ENCODE measurements at regions of chr2 and their contacts with region 1.

Region 1: GRCh38 chr2:241443486-241444223 is 64.7 kb downstream of the STK25 start:
- DNase-seq: peak; percentile 98
- H3K4me3 Mint-ChIP-seq: no peak overlapping the region
- H3K27ac Mint-ChIP-seq: peak overlapping the region; percentile 22
- H3K4me1 Mint-ChIP-seq: peaks cover 24% of the 10 kb centered on the region
- H3K27me3 Mint-ChIP-seq: peaks cover 54% of the 10 kb centered on the region

Region 2: GRCh38 chr2:241339839-241340630 is 103.6 kb before region 1 on chr2:
- CTCF ChIA-PET with region 1: no interaction called
- intact Hi-C with region 1: loop called (anchors 1 kb)
- DNase-seq: no peak
- H3K4me3 Mint-ChIP-seq: no peak overlapping the region
- H3K27ac Mint-ChIP-seq: peak overlapping the region; percentile 80
- H3K4me1 Mint-ChIP-seq: peaks cover 44% of the 10 kb centered on the region
- H3K27me3 Mint-ChIP-seq: no peaks in the 10 kb centered on the region

Region 3: GRCh38 chr2:241355983-241356870 is 87.4 kb before region 1 on chr2 and contains the start of gene FARP2:
- CTCF ChIA-PET with region 1: no interaction called
- intact Hi-C with region 1: loop called (anchors 1 kb)
- DNase-seq: peak; percentile 99
- H3K4me3 Mint-ChIP-seq: peak within 1 kb of the TSS; percentile 78
- H3K27ac Mint-ChIP-seq: peak within 1 kb of the TSS; percentile 76
- H3K4me1 Mint-ChIP-seq: peaks cover 27% of the 10 kb centered on the region
- H3K27me3 Mint-ChIP-seq: no peaks in the 10 kb centered on the region
- total RNA-seq, gene FARP2: 19.5 to 19.6 TPM

Region 4: DNA sequence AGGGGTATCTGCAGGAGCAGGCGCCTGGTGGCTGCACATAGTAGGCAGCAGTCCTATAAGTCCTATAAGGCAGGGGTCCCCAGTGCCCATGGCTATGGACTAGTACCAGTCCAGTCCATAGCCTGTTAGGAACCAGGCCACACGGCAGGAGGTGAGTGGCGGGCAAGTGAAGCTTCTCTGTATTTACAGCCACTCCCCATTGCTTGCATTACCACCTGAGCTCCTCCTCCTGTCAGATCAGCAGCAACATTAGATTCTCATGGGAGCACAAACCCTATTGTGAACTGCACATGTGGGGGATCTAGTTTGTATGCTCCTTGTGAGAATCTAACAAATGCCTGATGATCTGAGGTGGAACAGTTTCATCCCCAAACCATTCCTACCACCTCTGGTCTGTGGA is 31.6 kb after region 1 on chr2:
- CTCF ChIA-PET with region 1: no interaction called
- intact Hi-C with region 1: no loop called
- DNase-seq: no peak
- H3K4me3 Mint-ChIP-seq: no peak overlapping the region
- H3K27ac Mint-ChIP-seq: no peak overlapping the region
- H3K4me1 Mint-ChIP-seq: no peaks in the 10 kb centered on the region
- H3K27me3 Mint-ChIP-seq: peaks cover 12% of the 10 kb centered on the region

Region 5: DNA sequence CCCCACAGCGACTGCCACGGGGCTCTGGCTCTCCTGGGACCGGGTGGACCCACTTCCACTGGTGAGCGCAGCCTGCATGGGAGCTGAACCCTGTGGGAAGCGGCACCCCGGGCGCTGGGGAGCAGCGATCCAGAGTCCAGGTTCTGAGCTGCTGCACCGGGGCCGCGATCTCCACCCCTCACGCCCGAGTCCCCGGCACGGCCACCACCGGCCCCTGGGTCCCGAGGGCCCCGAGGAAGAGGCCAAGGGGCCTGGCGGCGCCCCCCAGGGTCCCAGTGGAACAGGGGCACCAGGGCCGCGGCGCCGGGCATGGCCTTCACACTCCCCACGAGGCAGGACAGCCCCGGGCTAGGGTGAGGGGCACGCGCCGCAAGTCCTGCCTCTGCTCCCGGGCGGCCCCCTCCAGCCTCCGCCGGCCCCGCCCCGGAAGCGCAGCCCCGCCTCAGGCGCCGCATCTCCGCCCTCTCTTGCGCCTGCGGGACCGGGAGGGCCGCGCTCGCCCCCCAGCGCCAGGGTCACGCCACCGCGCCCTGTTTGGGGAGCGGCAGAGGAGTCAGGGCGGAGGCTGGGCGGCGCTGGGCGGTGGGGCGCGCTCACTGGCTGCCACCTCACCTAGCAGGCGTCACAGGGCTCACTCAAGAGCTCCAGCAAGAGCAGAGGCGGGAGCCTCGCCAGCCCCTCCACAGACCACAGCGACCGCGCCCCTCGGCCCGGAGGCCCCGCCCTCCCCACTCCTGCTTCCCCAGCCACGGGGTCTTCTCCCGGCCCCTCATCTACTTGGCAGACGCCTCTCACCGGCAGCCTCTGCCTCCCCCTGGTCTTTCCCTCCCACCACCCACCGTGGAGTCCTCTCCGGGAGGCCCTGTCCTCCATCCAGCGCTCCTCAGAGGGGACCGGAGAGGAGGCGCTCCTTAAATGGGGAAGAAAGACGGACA is 166.5 kb after region 1 on chr2:
- CTCF ChIA-PET with region 1: no interaction called
- intact Hi-C with region 1: loop called (anchors 2 kb)
- DNase-seq: peak; percentile 90
- H3K4me3 Mint-ChIP-seq: peak overlapping the region; percentile 50
- H3K27ac Mint-ChIP-seq: no peak overlapping the region
- H3K4me1 Mint-ChIP-seq: peaks cover 15% of the 10 kb centered on the region
- H3K27me3 Mint-ChIP-seq: no peaks in the 10 kb centered on the region